ENCODE measurements at regions of chr2 and their contacts with region 1.

Region 1: DNA sequence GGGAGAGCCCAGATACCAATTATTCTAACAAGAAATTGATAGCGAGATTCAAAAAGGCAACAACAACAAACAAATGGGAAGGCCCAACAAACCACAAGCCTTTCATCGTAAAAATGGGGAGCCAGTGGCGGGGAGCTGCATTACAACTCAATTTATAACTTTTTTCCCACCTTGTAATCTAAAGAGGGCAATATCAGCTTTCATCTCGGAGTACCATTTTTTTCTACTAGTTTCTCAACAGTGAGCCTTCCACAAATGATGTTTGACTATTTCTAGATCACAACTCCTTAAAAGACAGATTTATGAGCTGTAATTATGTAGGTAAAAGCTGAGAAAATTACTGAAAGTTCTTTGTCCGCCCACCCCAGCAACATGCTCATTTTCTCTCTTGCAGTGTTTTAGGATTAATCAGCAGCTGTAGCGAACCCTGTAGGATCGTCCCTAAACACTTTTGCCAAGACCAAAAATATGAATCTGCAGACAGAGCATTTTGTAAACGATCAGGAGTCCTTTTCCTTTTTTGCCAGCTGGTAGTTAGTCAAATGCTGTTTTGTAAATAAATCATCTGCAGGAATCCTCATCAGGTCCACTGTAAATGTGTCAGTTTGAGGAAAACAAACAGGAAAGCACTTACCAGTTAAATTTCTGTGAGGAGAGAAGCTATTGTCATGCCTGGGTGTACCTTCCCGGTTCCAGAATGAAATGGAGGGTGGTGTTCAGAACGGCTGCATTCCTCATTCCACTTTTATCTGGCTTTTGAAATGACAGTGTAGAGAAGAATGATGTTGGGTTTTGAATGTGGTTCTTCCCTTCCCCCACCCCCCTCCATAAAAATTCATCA is 53.2 kb downstream of the EEF1B2 start:
- DNase-seq: peak; percentile 23
- H3K4me3 Mint-ChIP-seq: peak overlapping the region; percentile 81
- H3K27ac Mint-ChIP-seq: peak overlapping the region; percentile 95
- H3K4me1 Mint-ChIP-seq: peaks cover 23% of the 10 kb centered on the region
- H3K27me3 Mint-ChIP-seq: no peaks in the 10 kb centered on the region
- CTCF ChIP-seq: peak; percentile 17

Region 2: GRCh38 chr2:206198672-206199071 is 14.2 kb before region 1 on chr2:
- CTCF ChIA-PET with region 1: interaction called, 5 read pairs
- POLR2A ChIA-PET with region 1: interaction called, 34 read pairs
- intact Hi-C with region 1: no loop called
- DNase-seq: peak; percentile 40
- H3K4me3 Mint-ChIP-seq: no peak overlapping the region
- H3K27ac Mint-ChIP-seq: peak overlapping the region; percentile 18
- H3K4me1 Mint-ChIP-seq: peaks cover 27% of the 10 kb centered on the region
- H3K27me3 Mint-ChIP-seq: no peaks in the 10 kb centered on the region
- CTCF ChIP-seq: no peak

Region 3: DNA sequence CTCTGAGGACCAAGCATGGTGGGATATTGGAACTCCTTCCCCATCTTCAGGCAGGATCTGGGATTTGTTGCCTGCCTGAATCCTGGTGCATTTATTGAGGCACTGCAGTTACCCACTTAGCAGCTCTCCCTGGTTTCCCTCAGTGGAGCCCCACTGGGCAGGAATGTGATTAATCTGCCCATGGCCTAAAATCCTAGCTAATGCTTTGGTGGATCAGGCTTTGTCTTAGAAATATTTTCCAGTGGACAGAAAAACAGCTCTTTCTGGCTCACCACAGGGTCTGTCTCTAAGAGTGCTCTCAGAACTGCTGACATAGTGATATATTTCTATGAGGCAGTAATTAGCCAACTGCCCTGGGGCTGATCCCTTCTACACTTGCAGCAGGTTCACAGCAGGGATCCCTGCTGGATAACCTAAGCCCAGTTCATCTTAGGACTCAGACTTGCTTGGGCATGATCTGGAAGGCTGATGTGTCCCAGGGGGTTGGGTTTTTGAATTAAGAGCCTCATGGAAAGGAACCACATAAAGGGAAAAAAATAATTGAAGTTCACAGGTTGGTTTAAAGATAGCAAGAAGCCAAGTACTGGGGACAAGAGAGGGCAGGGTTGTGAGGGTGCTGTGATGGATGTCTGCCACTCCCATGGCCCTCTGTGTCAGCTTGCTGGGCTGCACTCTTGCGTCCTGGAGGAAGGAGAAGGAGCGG is 17.3 kb after region 1 on chr2:
- CTCF ChIA-PET with region 1: interaction called, 13 read pairs
- POLR2A ChIA-PET with region 1: interaction called, 61 read pairs
- intact Hi-C with region 1: no loop called
- DNase-seq: peak; percentile 87
- H3K4me3 Mint-ChIP-seq: no peak overlapping the region
- H3K27ac Mint-ChIP-seq: peak overlapping the region; percentile 2
- H3K4me1 Mint-ChIP-seq: peaks cover 17% of the 10 kb centered on the region
- H3K27me3 Mint-ChIP-seq: no peaks in the 10 kb centered on the region
- CTCF ChIP-seq: no peak

Region 4: GRCh38 chr2:206260188-206261012 is 47.5 kb after region 1 on chr2:
- CTCF ChIA-PET with region 1: interaction called, 17 read pairs
- POLR2A ChIA-PET with region 1: interaction called, 3 read pairs
- intact Hi-C with region 1: loop called (anchors 1 kb)
- DNase-seq: peak; percentile 44
- H3K4me3 Mint-ChIP-seq: no peak overlapping the region
- H3K27ac Mint-ChIP-seq: peak overlapping the region; percentile 65
- H3K4me1 Mint-ChIP-seq: peaks cover 15% of the 10 kb centered on the region
- H3K27me3 Mint-ChIP-seq: peaks cover 11% of the 10 kb centered on the region
- CTCF ChIP-seq: peak; percentile 45

Region 5: DNA sequence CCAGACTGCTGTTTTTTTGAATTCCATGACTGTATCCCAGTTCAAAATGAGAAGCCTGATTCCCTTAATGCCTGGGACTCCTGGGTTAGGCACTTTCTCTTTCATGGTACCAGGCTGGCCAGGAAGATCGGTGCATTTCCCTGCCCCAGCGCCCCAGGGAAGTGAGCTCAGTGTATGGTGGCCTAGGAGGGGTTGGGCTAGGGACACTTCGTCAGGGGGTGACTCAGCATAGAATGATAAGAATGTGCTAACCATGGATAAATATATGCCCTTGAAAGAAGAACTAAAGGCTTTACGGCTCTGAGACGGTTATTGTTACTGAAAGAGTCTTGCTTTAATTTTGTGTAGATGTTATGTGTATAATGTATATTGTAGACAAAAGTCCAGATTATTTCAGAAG is 401.9 kb after region 1 on chr2:
- CTCF ChIA-PET with region 1: no interaction called
- POLR2A ChIA-PET with region 1: no interaction called
- intact Hi-C with region 1: no loop called
- DNase-seq: peak; percentile 68
- H3K4me3 Mint-ChIP-seq: no peak overlapping the region
- H3K27ac Mint-ChIP-seq: peak overlapping the region; percentile 1
- H3K4me1 Mint-ChIP-seq: peaks cover 8% of the 10 kb centered on the region
- H3K27me3 Mint-ChIP-seq: no peaks in the 10 kb centered on the region
- CTCF ChIP-seq: no peak